GM12878 (cell line): ENCODE measurements at regions of chr2 and their contacts with region 1.

Region 1: DNA sequence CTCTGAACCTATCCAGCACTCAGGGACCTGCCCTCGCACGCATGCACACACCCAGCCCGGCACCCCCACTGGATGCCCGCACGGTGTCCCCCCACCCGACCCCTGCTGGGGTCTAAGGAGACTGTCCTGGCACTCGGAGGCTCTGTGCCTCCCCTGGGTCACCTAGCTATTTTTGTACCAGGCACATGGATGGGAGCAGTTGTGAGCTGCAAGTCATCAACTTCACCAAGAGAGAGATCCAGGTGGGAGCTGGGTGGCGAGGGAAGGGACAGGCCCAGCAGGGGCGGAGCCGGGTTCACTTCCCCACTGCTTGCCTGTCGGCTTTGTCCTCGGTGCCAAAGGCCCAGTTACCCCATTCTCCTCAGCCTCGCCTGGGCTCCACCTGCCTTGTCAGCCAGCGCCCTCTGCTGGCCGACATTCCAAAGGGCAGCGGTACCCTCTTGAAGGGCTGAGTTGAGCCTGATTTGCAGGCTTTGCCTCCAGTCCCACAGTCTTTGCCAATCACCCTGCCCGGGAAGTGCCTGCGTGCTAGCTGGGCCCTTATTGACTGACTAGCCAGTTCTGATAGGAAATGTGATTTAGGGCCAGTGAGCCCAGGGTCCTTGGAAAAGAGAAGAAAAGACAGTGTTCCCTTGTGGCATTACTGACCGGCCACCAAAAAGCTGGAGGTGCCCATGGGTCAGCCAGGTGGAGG is 5.8 kb downstream of the NT5DC4 start:
- DNase-seq: peak; percentile 61
- ATAC-seq: peak; percentile 86
- H3K4me3 ChIP-seq: no peak overlapping the region
- H3K27ac ChIP-seq: peak overlapping the region; percentile 39; the same call in 1 of the 2 replicates
- H3K4me1 ChIP-seq: peaks cover 22% of the 10 kb centered on the region
- H3K27me3 ChIP-seq: no peaks in the 10 kb centered on the region
- CTCF ChIP-seq: peak; percentile 98 to 99 (median 99); a peak in 5 of 6 replicates
- EP300 ChIP-seq: no peak; a peak in 1 of 4 replicates
- POLR2A ChIP-seq: no peak
- RAD21 ChIP-seq: peak; percentile 100

Region 2: GRCh38 chr2:112606488-112606902 is 120.1 kb before region 1 on chr2:
- CTCF ChIA-PET with region 1: interaction called, 286 read pairs
- POLR2A ChIA-PET with region 1: interaction called, 3 read pairs
- RAD21 ChIA-PET with region 1: interaction called, 132 read pairs
- SMC1A ChIA-PET with region 1: interaction called, 122 read pairs
- in situ Hi-C with region 1: loop called (anchors 5 kb)
- intact Hi-C with region 1: no loop called
- DNase-seq: no peak
- ATAC-seq: peak; percentile 20; the same call in 1 of the 3 replicates
- H3K4me3 ChIP-seq: no peak overlapping the region
- H3K27ac ChIP-seq: no peak overlapping the region
- H3K4me1 ChIP-seq: no peaks in the 10 kb centered on the region
- H3K27me3 ChIP-seq: no peaks in the 10 kb centered on the region
- CTCF ChIP-seq: no peak
- EP300 ChIP-seq: no peak
- POLR2A ChIP-seq: no peak
- RAD21 ChIP-seq: no peak

Region 3: DNA sequence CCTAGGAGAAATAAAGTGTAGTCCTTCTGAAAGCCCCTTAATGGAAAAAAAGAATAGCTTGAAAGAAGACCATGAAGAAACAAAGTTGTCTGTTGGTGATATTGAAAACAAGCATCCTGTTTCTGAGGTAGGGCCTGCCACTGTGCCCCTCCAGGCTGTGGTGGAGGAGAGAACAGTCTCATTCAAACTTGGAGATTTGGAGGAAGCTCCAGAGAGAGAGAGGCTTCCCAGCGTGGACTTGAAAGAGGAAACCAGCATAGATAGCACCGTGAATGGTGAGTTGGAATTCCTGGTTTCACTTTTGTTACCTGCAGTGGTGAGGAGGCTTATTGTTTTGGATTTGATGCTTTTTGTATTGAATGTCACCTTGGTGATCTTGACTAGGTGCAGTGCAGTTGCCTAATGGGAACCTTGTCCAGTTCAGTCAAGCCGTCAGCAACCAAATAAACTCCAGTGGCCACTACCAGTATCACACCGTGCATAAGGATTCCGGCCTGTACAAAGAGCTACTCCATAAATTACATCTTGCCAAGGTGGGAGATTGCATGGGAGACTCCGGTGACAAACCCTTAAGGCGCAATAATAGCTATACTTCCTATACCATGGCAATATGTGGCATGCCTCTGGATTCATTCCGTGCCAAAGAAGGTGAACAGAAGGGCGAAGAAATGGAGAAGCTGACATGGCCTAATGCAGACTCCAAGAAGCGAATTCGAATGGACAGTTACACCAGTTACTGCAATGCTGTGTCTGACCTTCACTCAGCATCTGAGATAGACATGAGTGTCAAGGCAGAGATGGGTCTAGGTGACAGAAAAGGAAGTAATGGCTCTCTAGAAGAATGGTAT is 67.6 kb before region 1 on chr2:
- CTCF ChIA-PET with region 1: interaction called, 8 read pairs
- POLR2A ChIA-PET with region 1: interaction called, 6 read pairs
- RAD21 ChIA-PET with region 1: interaction called, 10 read pairs
- SMC1A ChIA-PET with region 1: interaction called, 6 read pairs
- in situ Hi-C with region 1: no loop called
- intact Hi-C with region 1: no loop called
- DNase-seq: no peak
- ATAC-seq: no peak
- H3K4me3 ChIP-seq: peak overlapping the region; percentile 6; the same call in 1 of the 2 replicates
- H3K27ac ChIP-seq: no peak overlapping the region; the same call in 1 of the 2 replicates
- H3K4me1 ChIP-seq: peaks cover 21% of the 10 kb centered on the region
- H3K27me3 ChIP-seq: no peaks in the 10 kb centered on the region
- CTCF ChIP-seq: no peak
- EP300 ChIP-seq: no peak
- POLR2A ChIP-seq: no peak; the same call in 1 of the 2 replicates
- RAD21 ChIP-seq: no peak

Region 4: DNA sequence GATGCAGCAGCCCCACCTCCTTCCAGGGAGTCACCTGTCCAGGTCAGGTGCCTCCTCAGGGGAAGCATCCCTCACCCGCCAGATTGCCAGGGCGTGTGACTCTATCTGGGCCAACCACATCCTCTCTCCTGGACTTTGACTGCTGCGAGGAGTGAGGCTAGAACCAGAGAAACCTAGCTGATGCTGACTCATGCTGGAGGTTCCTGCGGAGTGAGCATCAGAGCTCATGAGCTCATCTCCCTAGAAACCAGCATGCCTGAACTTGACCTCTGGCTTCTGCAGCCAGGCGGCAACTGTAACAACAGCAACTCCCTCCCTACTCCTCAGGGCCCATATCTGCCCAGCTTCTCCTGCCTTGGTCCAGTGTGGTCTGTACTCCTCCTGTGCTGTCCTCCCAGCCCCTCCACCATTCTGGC is 34.1 kb before region 1 on chr2:
- CTCF ChIA-PET with region 1: interaction called, 209 read pairs
- POLR2A ChIA-PET with region 1: interaction called, 40 read pairs
- RAD21 ChIA-PET with region 1: interaction called, 140 read pairs
- SMC1A ChIA-PET with region 1: interaction called, 84 read pairs
- in situ Hi-C with region 1: no loop called
- intact Hi-C with region 1: loop called (anchors 1 kb)
- DNase-seq: peak; percentile 87
- ATAC-seq: peak; percentile 94
- H3K4me3 ChIP-seq: no peak overlapping the region
- H3K27ac ChIP-seq: peak overlapping the region; percentile 76
- H3K4me1 ChIP-seq: peaks cover 32% of the 10 kb centered on the region
- H3K27me3 ChIP-seq: no peaks in the 10 kb centered on the region
- CTCF ChIP-seq: no peak
- EP300 ChIP-seq: peak; percentile 68 to 79
- POLR2A ChIP-seq: peak; percentile 64
- RAD21 ChIP-seq: no peak

Region 5: GRCh38 chr2:112740527-112740926 is 13.9 kb after region 1 on chr2:
- CTCF ChIA-PET with region 1: interaction called, 26 read pairs
- POLR2A ChIA-PET with region 1: interaction called, 3 read pairs
- RAD21 ChIA-PET with region 1: interaction called, 7 read pairs
- SMC1A ChIA-PET with region 1: interaction called, 19 read pairs
- in situ Hi-C with region 1: no loop called
- intact Hi-C with region 1: no loop called
- DNase-seq: no peak
- ATAC-seq: no peak
- H3K4me3 ChIP-seq: no peak overlapping the region
- H3K27ac ChIP-seq: no peak overlapping the region
- H3K4me1 ChIP-seq: no peaks in the 10 kb centered on the region
- H3K27me3 ChIP-seq: no peaks in the 10 kb centered on the region
- CTCF ChIP-seq: no peak
- EP300 ChIP-seq: no peak
- POLR2A ChIP-seq: no peak
- RAD21 ChIP-seq: no peak